Common myeloid progenitor, CD34-positive (primary cell): ENCODE measurements at regions of chrX and their contacts with region 1.

Region 1: DNA sequence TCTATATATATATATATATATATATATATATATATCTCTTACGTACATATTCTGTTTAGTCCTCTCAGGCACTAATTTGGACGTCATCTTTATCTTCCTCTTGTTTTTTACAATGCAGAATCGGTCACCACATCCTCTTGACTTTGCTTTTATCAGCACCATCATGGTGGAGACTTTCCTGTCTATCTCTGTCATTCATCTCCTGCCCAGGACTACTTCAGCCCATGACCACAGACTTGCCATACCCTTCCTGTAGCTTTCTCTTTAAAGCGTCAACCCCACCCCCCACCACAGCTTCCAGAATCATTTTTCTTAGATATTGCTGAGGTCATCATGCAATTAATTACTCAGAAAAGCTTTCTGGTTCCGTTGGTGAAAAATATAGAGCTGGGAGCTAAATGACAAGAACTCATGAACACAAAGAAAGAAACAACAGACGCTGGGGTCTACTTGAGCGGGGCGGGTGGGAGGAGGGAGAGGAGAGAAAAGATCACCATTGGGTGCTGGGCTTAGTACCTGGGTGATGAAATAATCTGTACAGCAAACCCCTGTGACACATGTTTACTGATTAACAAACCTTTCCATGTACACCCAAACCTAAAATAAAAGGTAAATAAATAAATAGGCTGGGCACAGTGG is 30.5 kb upstream of the PRKX start:
- DNase-seq: peak; percentile 82 to 97 (median 94)
- H3K4me3 ChIP-seq: peak overlapping the region in 2 of 7 experiments; percentile 11 to 33
- H3K27ac ChIP-seq: peak overlapping the region in 1 of 2 experiments; percentile 25
- H3K4me1 ChIP-seq: peaks cover 0 to 22% (median 12%) of the 10 kb centered on the region in 4 experiments
- H3K27me3 ChIP-seq: no peaks in the 10 kb centered on the region

Region 2: GRCh38 chrX:3815896-3816664 is 72.2 kb after region 1 on chrX:
- CTCF ChIA-PET with region 1: no interaction called
- POLR2A ChIA-PET with region 1: interaction called, 10 read pairs
- DNase-seq: peak; percentile 11 to 69 (median 56)
- H3K4me3 ChIP-seq: peak overlapping the region; percentile 31 to 82 (median 76)
- H3K27ac ChIP-seq: peak overlapping the region; percentile 78 to 86
- H3K4me1 ChIP-seq: peaks cover 0 to 21% (median 11%) of the 10 kb centered on the region in 4 experiments
- H3K27me3 ChIP-seq: no peaks in the 10 kb centered on the region